ENCODE measurements at regions of chr3 and their contacts with region 1.

Region 1: DNA sequence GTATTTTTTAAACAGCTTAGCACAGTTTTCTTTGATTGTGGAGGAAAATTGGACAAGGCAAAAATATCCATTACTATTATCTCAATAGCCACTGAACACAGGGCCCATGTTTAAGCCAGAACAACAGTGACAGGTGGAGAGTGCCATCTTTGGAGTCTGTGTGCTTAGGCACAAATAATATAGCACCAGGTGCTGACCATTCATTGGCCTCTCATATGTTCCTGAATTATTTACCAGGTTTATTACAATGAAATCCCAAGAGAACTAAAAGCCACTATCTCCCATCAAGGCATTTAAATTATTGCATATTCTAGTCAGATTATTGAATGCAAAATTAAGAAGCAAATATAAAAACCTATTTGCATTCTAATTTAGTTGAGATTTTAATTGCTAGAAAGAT is 39.6 kb downstream of the GPR156 start:
- DNase-seq: no peak
- H3K4me3 ChIP-seq: no peak overlapping the region
- H3K27ac ChIP-seq: no peak overlapping the region
- H3K4me1 ChIP-seq: peaks cover 0 to 4% (median 0%) of the 10 kb centered on the region in 4 donors
- H3K27me3 ChIP-seq: no peaks in the 10 kb centered on the region
- CTCF ChIP-seq: no peak
- EP300 ChIP-seq: no peak
- POLR2A ChIP-seq: no peak

Region 2: DNA sequence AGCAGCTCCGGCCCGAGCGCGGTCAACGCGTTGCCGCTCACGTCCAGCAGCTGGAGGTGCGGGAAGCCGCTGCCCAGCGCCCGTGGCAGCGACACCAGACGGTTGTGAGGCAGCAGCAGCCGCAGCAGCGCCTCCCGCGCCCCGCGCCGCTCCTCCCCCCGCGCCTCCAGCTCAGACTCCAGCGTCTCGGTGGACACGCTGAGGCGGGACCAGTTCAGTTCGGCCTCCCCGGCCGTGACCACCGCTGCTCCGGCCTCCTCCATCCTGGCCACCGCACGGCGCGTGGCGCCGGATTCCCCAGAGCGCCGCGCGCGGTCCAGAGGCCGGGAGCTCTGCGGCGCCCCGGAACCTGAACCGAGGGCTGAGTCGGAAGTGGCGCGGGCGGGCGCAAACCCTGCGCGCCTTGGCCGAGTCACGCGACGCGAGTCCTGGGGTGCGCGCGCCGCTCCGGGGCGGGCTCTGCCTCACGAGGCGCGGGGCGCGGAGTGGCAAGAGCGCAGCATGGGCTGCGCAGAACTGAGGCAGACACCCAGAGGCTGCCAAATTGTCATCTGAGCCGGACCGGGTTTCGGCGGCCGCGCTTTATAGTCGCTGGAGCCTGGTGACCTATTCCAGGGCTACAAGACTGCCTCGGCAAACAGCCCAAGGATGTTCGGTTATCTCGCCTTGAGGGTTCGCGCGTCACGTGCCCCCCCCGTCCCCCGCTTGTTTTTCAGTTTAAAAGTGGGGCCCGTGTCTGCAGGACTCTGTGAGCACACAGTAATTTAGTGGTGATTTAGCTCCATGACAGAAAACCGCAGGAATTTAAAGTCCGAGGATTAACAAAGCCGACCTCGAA is 103.8 kb after region 1 on chr3 and contains the start of gene LRRC58:
- in situ Hi-C with region 1: no loop called
- intact Hi-C with region 1: loop called (anchors 10 kb)
- DNase-seq: peak; percentile 91
- H3K4me3 ChIP-seq: peak within 1 kb of the TSS; percentile 42 to 85 (median 68)
- H3K27ac ChIP-seq: peak within 1 kb of the TSS; percentile 87 to 96 (median 91)
- H3K4me1 ChIP-seq: peaks cover 3 to 41% (median 14%) of the 10 kb centered on the region in 4 donors
- H3K27me3 ChIP-seq: no peaks in the 10 kb centered on the region
- CTCF ChIP-seq: peak in 2 of 5 experiments; percentile 29 to 30
- EP300 ChIP-seq: no peak
- POLR2A ChIP-seq: peak; percentile 87
- total RNA-seq, gene LRRC58: 7.9 to 23.2 (median 15.2) TPM

Region 3: DNA sequence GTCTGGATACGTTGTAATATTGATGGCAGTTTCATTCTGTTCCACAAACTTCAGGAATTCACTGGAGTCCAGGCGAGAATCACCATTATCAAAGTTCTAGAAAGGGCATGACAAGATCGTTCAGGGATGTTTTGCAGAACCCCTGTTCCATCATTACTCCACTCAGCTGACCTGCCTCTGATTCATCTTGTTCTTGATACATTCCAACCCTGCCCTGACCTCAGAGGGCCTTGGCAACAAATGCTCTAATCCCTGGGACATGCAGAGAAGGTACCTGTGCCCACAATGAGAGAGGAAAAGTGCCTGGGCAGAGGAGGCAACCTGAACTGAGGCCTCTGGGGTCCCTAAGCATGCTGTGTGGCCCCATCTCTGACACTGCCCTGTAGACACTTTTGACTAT is 159.5 kb after region 1 on chr3:
- in situ Hi-C with region 1: loop called (anchors 5 to 10 kb)
- intact Hi-C with region 1: no loop called
- DNase-seq: no peak
- H3K4me3 ChIP-seq: no peak overlapping the region
- H3K27ac ChIP-seq: no peak overlapping the region
- H3K4me1 ChIP-seq: no peaks in the 10 kb centered on the region
- H3K27me3 ChIP-seq: no peaks in the 10 kb centered on the region
- CTCF ChIP-seq: no peak
- EP300 ChIP-seq: no peak
- POLR2A ChIP-seq: no peak

Region 4: GRCh38 chr3:120417272-120417911 is 172.0 kb after region 1 on chr3:
- in situ Hi-C with region 1: loop called in 1 of 4 experiments (anchors 10 kb)
- intact Hi-C with region 1: loop called (anchors 5 kb)
- DNase-seq: peak; percentile 96
- H3K4me3 ChIP-seq: peak overlapping the region in 1 of 4 donors; percentile 32
- H3K27ac ChIP-seq: peak overlapping the region; percentile 69 to 84 (median 80)
- H3K4me1 ChIP-seq: peaks cover 18 to 62% (median 31%) of the 10 kb centered on the region in 4 donors
- H3K27me3 ChIP-seq: no peaks in the 10 kb centered on the region
- CTCF ChIP-seq: peak; percentile 78 to 93 (median 85)
- EP300 ChIP-seq: no peak
- POLR2A ChIP-seq: no peak

Region 5: DNA sequence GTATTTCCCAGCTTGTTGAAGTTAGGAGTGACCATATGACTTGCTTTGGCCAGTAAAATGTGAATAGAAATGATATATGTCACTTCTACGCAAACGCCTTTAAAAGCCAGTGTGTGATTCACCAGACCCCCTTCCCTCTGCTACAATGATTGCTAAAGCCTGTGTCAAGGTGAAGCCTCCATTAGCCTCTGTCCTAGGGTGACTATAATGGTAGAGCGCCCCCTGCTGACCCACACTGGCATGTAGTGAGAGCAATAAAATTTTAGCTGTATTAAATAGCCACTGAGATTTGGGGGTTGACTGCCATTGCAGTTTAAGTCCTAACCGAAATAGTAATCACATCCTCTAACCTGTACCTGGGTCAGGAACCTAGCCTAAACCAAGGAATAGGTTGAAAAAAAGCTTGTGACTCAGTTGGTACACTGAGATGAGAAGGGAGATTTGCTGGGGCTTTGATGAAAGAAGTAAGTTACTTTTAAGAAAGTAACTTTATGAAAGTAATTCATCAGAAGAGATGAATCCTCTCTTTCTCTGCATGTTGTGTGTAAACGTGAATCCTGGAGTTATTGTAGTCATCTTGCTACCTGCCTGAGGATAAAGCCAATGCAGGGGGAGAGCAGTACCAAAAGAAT is 549.7 kb after region 1 on chr3:
- in situ Hi-C with region 1: loop called in 3 of 4 experiments (anchors 10 to 25 kb)
- intact Hi-C with region 1: loop called (anchors 10 kb)
- DNase-seq: peak; percentile 80
- H3K4me3 ChIP-seq: no peak overlapping the region
- H3K27ac ChIP-seq: no peak overlapping the region
- H3K4me1 ChIP-seq: peaks cover 0 to 38% (median 21%) of the 10 kb centered on the region in 4 donors
- H3K27me3 ChIP-seq: no peaks in the 10 kb centered on the region
- CTCF ChIP-seq: peak; percentile 61 to 70 (median 68)
- EP300 ChIP-seq: no peak
- POLR2A ChIP-seq: no peak

Measured in transverse colon (tissue), 4 donors.